AG04449 (cell line): ENCODE measurements at regions of chr2 and their contacts with region 1.

Region 1: DNA sequence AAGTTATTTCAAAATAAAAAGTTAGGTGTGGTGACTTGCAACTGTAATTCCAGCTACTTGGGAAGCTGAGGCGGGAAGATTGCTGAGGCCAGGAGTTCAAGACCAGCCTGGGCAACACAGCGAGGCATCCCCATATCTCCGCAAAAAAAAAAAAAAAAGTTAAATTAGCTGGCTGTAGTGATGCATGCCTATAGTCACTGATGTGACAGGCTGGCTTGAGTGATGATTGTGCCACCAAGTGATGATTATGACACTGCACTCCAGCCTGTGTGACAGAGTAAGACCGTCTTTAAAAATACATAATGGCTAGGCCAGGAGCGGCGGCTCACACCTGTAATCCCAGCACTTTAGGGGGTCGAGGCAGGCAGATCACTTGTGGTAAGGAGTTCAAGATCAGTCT is 11.5 kb downstream of the SMPD4 start:
- DNase-seq: no peak
- H3K4me3 ChIP-seq: no peak overlapping the region
- CTCF ChIP-seq: no peak

Region 2: DNA sequence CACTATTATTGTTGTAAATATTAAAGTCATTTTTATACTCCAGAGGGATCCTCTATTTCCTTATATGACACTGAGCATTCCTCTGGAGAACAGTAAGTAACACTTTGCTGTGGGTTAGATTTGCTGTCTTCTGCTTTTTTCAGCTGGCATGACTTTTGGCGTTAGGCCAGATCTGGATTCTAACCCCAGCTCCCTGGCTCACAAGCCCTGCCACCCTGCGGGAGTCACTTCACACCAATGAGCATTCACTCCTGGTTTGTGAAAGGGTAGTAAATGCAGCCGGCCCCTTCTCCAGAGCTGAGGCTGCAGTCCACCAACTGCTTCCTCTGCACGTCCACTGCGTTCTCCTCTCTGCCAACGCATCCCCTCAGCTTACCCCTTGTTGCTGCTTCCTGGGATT is 564.2 kb before region 1 on chr2:
- CTCF ChIA-PET with region 1: no interaction called
- POLR2A ChIA-PET with region 1: no interaction called
- DNase-seq: no peak
- H3K4me3 ChIP-seq: no peak overlapping the region
- CTCF ChIP-seq: no peak

Region 3: DNA sequence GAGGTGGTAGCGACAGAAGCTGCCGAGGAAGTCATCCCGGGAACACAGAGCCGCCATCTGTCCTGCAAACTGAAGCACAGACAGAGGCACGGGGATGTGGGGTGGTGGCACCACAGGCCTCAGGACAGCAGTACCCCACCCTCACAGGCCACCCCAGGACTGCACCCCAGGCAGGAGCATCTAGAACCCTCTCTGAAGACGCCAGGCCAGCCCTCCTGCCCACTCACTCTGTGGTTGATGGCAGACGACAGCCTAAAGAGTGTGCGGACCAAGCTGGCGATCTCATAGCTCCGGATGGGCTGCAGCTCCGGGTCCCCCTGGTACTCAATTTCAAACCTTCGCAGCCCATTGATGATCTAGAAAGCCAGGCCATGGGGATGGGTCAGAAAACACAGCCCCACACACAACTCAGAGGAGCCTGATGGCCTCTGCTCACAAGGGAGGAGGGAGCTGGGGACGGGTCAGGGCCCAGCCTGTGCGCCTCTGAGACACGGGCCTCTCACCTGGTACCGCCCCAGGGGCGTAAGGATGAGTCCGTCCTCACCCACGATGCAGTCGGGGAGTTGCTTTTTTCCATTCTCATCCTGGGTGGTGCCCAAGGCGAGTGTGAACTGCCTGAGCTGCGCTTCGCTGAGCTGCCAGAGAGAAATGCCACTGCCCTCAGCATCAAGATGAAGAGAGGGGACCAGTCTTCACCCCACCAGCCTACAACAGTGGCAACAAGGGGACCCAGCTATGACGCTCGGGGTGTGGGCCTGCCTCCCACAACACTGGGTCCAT is 16.9 kb before region 1 on chr2:
- CTCF ChIA-PET with region 1: no interaction called
- POLR2A ChIA-PET with region 1: no interaction called
- DNase-seq: no peak
- H3K4me3 ChIP-seq: no peak overlapping the region
- CTCF ChIP-seq: no peak

Region 4: DNA sequence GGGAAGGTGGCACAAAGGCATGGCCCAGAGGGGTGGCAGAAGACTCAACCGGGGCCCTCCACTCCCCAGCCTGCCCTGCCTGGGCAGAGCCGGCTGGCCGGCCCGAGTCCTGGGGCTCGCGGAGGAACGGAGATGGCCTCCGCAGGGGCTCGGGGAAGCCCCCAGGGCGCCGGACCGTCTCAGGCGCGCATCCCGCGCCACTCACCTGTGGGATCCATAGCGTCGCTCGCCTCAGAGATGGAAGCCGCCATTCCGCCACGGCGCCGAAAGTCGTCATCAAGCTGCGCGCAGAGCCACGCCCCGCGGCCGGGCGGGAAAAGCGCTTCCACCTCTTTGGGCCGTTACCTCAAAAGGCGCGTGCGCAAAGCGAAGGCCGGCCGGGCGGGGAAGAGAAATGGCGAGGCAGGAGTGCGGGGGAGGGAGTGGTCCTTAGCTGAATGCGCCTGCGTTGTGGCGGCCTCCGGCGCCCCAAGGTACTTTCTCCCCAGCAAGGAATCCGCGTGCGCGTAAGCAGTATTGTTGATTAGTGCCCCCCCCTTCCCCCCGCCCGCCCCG is 11.5 kb after region 1 on chr2 and contains the start of gene SMPD4:
- CTCF ChIA-PET with region 1: interaction called, 13 read pairs
- POLR2A ChIA-PET with region 1: interaction called, 10 read pairs
- DNase-seq: peak; percentile 65
- H3K4me3 ChIP-seq: peak within 1 kb of the TSS; percentile 88
- CTCF ChIP-seq: no peak

Region 5: DNA sequence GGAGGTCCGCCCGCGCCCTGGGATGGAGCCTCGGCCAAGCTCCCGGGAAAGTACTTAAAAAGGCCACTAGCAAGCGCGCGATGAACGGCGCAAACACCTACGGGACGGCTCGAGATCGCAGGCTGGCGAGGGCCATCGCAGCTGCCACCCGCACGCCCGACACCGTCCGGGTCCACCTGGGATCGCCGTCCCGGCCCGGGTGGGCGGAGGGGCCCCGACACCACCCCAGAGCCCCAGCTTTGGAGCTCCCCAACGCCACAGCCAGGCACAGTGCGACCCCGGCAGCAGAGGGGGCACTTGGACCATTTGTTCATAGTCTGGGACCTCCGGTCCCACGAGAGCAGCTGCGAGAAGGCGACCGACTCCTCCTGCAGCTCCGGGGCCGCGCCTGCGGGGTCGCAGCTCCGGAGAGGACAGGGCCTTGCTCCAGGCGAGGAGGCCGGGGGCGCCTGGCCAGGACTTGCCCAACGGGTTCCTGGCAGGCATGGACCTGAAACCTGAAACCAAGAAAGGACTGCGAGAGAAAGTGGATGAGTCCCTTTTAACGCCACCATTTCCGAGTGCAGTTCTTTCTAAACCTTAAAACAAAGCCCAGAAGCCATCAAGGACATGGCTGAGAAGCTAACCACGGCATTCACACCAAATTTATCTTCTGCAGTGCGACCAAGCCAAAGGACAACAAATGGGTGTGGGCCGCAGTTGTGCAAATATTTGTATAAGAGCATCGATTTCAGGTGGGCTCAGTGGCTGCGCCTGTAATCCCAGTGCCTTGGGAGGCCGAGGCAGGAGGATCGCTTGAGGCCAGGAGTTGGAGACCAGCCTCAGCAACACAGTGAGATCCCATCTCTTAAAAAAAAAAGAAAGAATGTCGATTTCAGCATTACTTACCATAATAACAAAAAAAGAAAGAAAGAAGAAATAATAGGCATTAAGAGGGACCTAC is 118.8 kb after region 1 on chr2:
- CTCF ChIA-PET with region 1: no interaction called
- POLR2A ChIA-PET with region 1: no interaction called
- DNase-seq: no peak
- H3K4me3 ChIP-seq: no peak overlapping the region
- CTCF ChIP-seq: no peak